ENCODE measurements at regions of chr13 and their contacts with region 1.

Region 1: GRCh38 chr13:51797664-51798488 is 6.1 kb downstream of the DHRS12 start:
- DNase-seq: peak in 5 of 6 donors; percentile 86 to 93 (median 89)
- ATAC-seq: peak; percentile 77 to 85 (median 80)
- H3K4me3 ChIP-seq: no peak overlapping the region
- H3K27ac ChIP-seq: peak overlapping the region in 3 of 4 donors; percentile 37 to 51 (median 46)
- H3K4me1 ChIP-seq: peaks cover 13 to 48% (median 20%) of the 10 kb centered on the region in 3 donors
- H3K27me3 ChIP-seq: no peaks in the 10 kb centered on the region
- CTCF ChIP-seq: peak; percentile 43 to 61 (median 57)

Region 2: DNA sequence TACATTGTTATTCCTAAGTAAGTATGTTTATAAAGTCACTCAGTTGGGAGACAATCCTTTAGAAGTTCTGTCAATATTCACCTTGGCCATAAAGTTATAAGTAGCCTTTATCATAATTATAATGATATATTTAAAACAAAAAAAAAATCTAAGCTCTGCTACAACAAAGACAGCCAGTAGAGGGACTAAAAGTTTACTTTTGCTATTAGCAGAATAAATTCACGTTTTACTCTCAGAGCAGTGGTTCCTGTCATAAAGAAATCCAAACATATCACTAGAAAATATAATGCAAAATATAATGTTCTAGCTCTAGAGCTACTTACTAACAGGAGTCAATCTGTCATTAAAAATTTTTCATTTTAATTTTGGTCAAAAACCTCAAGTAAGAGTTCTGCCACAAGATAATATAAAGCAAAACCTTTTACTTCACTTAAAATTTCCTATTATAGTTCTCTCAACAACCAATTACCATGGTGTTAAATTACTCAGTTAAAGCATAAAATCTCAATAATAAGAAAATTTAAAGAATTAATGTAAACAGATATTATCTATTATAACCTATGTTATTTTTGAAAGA is 362.8 kb before region 1 on chr13:
- intact Hi-C with region 1: loop called in 2 of 3 experiments (anchors 10 kb)
- DNase-seq: no peak
- ATAC-seq: peak; percentile 39 to 69 (median 56)
- H3K4me3 ChIP-seq: no peak overlapping the region
- H3K27ac ChIP-seq: no peak overlapping the region
- H3K4me1 ChIP-seq: peaks cover 19 to 29% (median 20%) of the 10 kb centered on the region in 3 donors
- H3K27me3 ChIP-seq: no peaks in the 10 kb centered on the region
- CTCF ChIP-seq: peak in 3 of 4 donors; percentile 26 to 35 (median 32)

Region 3: GRCh38 chr13:51444922-51445321 is 353.0 kb before region 1 on chr13:
- intact Hi-C with region 1: loop called in 1 of 3 experiments (anchors 10 kb)
- DNase-seq: no peak
- ATAC-seq: peak in 1 of 4 donors; percentile 32
- H3K4me3 ChIP-seq: no peak overlapping the region
- H3K27ac ChIP-seq: no peak overlapping the region
- H3K4me1 ChIP-seq: peaks cover 5 to 12% (median 7%) of the 10 kb centered on the region in 3 donors
- H3K27me3 ChIP-seq: no peaks in the 10 kb centered on the region
- CTCF ChIP-seq: no peak

Region 4: DNA sequence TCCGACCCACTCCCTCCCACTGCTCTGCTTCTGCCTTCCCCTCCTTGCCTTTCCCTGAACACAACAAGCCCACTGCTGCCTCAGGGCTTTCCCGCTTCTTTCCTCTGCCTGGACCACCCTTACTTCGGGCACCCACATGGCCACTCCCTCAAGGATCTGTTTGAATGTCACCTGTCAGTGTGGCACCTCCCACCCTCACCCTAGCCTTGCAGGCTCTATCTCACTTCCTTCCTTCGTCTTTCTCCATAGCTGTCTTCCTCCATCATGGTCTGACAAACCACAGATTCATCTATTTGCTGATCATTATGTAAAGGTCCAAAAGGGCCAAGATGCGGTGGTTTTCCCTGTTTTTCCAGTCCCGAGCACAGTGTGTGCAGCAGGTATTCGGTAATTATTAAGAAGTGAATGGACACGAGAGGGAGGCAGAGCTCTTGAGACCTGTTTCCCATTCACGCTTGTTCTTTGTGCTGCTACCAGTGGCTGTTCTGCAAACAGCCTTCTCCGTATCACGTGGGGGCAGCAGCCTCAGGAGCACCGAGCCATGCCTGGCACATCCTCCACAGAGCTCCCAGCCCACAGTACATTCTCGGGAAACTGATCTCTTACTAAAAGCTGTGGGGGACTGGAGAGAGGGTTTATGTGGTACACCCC is 114.1 kb after region 1 on chr13:
- intact Hi-C with region 1: no loop called
- DNase-seq: peak in 2 of 6 donors; percentile 14 to 23
- ATAC-seq: peak in 3 of 4 donors; percentile 72 to 93 (median 89)
- H3K4me3 ChIP-seq: no peak overlapping the region
- H3K27ac ChIP-seq: no peak overlapping the region
- H3K4me1 ChIP-seq: no peaks in the 10 kb centered on the region
- H3K27me3 ChIP-seq: no peaks in the 10 kb centered on the region
- CTCF ChIP-seq: no peak

Region 5: GRCh38 chr13:52428295-52428694 is 630.4 kb after region 1 on chr13:
- intact Hi-C with region 1: no loop called
- DNase-seq: no peak
- ATAC-seq: peak; percentile 40 to 86 (median 76)
- H3K4me3 ChIP-seq: no peak overlapping the region
- H3K27ac ChIP-seq: peak overlapping the region in 1 of 4 donors; percentile 25
- H3K4me1 ChIP-seq: peaks cover 0 to 13% (median 5%) of the 10 kb centered on the region in 3 donors
- H3K27me3 ChIP-seq: no peaks in the 10 kb centered on the region
- CTCF ChIP-seq: no peak